Activated CD8-positive, alpha-beta T cell treated with anti-CD3 and anti-CD28 coated beads for 36 hours (primary cell): ENCODE measurements at regions of chr16 and their contacts with region 1.

Region 1: GRCh38 chr16:4350787-4351659 is at the start of gene PAM16:
- DNase-seq: peak; percentile 99
- ATAC-seq: peak; percentile 95
- H3K4me3 Mint-ChIP-seq: peak within 1 kb of the TSS; percentile 96
- H3K27ac Mint-ChIP-seq: peak within 1 kb of the TSS; percentile 95
- H3K4me1 Mint-ChIP-seq: peaks cover 29% of the 10 kb centered on the region
- H3K27me3 Mint-ChIP-seq: no peaks in the 10 kb centered on the region
- CTCF ChIP-seq: no peak
- total RNA-seq, gene PAM16: 65.9 to 70.1 TPM

Region 2: GRCh38 chr16:4416200-4417032 is 65.4 kb after region 1 on chr16 and contains the start of gene CORO7:
- CTCF ChIA-PET with region 1: interaction called, 3 read pairs
- POLR2A ChIA-PET with region 1: no interaction called
- intact Hi-C with region 1: loop called (anchors 10 kb)
- DNase-seq: peak; percentile 97
- ATAC-seq: peak; percentile 77
- H3K4me3 Mint-ChIP-seq: peak within 1 kb of the TSS; percentile 84
- H3K27ac Mint-ChIP-seq: peak within 1 kb of the TSS; percentile 90
- H3K4me1 Mint-ChIP-seq: peaks cover 31% of the 10 kb centered on the region
- H3K27me3 Mint-ChIP-seq: no peaks in the 10 kb centered on the region
- CTCF ChIP-seq: no peak
- total RNA-seq, gene CORO7: 73.3 to 76.6 TPM

Region 3: GRCh38 chr16:4500272-4500671 is 149.2 kb after region 1 on chr16:
- CTCF ChIA-PET with region 1: no interaction called
- POLR2A ChIA-PET with region 1: no interaction called
- intact Hi-C with region 1: no loop called
- DNase-seq: peak; percentile 25
- ATAC-seq: peak; percentile 77
- H3K4me3 Mint-ChIP-seq: no peak overlapping the region
- H3K27ac Mint-ChIP-seq: no peak overlapping the region
- H3K4me1 Mint-ChIP-seq: peaks cover 81% of the 10 kb centered on the region
- H3K27me3 Mint-ChIP-seq: no peaks in the 10 kb centered on the region
- CTCF ChIP-seq: no peak